Colonic mucosa (tissue), 4 donors: ENCODE measurements at regions of chr7 and their contacts with region 1.

Region 1: DNA sequence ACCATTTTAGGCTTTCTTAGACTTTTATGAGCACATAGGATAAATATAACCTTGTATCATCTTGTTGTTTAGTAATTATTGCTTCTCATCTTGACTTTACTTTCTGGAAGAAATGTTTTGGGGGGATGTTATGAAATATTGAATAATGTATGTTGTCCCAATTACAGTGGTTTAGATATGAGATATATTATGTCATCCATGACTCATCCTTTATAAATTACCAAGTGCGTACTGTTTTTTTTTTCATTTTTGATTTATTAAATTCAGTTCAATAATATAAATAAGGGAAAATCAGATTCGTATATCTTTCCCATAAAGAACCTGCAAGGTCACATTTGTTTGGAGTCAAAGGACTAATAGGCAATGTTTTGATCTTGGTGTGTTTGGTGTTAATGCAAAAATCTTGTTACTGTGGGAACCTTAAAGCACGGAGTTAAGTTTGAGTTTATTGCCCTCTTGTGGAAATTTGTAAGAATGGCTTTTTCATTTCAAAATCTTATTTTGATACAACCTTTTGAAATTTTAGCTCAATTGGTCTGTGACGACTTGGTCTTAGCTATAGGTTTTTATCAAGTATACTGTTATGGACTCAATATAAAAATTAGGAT is 108.6 kb downstream of the SRI start:
- DNase-seq: no peak
- H3K4me3 ChIP-seq: no peak overlapping the region
- H3K27ac ChIP-seq: no peak overlapping the region
- H3K4me1 ChIP-seq: no peaks in the 10 kb centered on the region
- H3K27me3 ChIP-seq: no peaks in the 10 kb centered on the region
- CTCF ChIP-seq: peak; percentile 27

Region 2: GRCh38 chr7:87797798-87798403 is 313.3 kb before region 1 on chr7:
- intact Hi-C with region 1: loop called (anchors 5 kb)
- DNase-seq: no peak
- H3K4me3 ChIP-seq: no peak overlapping the region
- H3K27ac ChIP-seq: no peak overlapping the region
- H3K4me1 ChIP-seq: no peaks in the 10 kb centered on the region
- H3K27me3 ChIP-seq: no peaks in the 10 kb centered on the region
- CTCF ChIP-seq: peak; percentile 51

Region 3: GRCh38 chr7:88169717-88170320 is 58.6 kb after region 1 on chr7:
- intact Hi-C with region 1: no loop called
- DNase-seq: no peak
- H3K4me3 ChIP-seq: no peak overlapping the region
- H3K27ac ChIP-seq: no peak overlapping the region
- H3K4me1 ChIP-seq: no peaks in the 10 kb centered on the region
- H3K27me3 ChIP-seq: no peaks in the 10 kb centered on the region
- CTCF ChIP-seq: no peak

Region 4: GRCh38 chr7:88689821-88690220 is 578.6 kb after region 1 on chr7:
- intact Hi-C with region 1: no loop called
- DNase-seq: no peak
- H3K4me3 ChIP-seq: no peak overlapping the region
- H3K27ac ChIP-seq: no peak overlapping the region
- H3K4me1 ChIP-seq: no peaks in the 10 kb centered on the region
- H3K27me3 ChIP-seq: no peaks in the 10 kb centered on the region
- CTCF ChIP-seq: no peak